Activated naive CD4-positive, alpha-beta T cell treated with anti-CD3 and anti-CD28 coated beads for 36 hours (primary cell): ENCODE measurements at regions of chr14 and their contacts with region 1.

Region 1: DNA sequence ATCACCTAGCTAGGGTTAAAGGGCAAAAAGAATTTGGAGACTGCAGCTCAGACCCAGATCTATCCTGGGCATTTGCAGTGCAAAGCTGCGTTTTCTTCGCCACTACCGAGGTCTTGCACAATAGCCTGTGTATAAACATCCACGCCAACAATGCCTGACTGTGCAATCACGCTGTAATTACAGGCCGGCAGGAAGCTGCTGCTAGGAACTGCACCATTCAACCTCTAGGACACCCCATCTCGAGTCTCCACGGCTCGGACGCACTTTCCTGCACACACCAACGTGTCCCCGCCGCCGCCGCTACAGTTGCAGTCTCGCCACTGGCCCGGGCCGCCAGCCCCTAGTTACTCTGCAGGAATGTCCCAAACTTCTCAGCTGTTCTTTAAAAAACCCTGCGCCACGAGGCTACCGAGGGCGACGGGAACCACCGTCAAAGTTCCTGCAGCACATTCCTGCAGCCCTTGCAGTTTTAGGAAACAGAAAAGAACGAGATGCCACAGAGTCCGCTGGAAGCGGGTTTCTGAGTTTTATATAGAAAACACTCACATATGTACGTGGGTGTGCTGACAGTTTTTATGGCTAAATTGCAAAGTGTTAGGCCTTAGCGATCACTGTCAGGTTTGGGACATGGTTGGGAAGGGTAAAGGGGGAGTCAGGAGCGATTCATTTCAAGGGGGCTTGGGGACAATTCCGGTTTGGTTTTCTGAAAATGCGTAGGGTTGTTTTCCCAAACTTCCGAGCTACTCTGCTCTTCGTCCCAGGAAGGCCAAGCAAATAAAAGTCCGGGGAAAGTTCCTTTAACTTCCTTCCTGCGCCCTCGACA is 65.5 kb upstream of the PTGR2 start:
- DNase-seq: peak; percentile 75
- H3K4me3 Mint-ChIP-seq: peak overlapping the region; percentile 90
- H3K27ac Mint-ChIP-seq: peak overlapping the region; percentile 91
- H3K4me1 Mint-ChIP-seq: peaks cover 56% of the 10 kb centered on the region
- H3K27me3 Mint-ChIP-seq: no peaks in the 10 kb centered on the region

Region 2: DNA sequence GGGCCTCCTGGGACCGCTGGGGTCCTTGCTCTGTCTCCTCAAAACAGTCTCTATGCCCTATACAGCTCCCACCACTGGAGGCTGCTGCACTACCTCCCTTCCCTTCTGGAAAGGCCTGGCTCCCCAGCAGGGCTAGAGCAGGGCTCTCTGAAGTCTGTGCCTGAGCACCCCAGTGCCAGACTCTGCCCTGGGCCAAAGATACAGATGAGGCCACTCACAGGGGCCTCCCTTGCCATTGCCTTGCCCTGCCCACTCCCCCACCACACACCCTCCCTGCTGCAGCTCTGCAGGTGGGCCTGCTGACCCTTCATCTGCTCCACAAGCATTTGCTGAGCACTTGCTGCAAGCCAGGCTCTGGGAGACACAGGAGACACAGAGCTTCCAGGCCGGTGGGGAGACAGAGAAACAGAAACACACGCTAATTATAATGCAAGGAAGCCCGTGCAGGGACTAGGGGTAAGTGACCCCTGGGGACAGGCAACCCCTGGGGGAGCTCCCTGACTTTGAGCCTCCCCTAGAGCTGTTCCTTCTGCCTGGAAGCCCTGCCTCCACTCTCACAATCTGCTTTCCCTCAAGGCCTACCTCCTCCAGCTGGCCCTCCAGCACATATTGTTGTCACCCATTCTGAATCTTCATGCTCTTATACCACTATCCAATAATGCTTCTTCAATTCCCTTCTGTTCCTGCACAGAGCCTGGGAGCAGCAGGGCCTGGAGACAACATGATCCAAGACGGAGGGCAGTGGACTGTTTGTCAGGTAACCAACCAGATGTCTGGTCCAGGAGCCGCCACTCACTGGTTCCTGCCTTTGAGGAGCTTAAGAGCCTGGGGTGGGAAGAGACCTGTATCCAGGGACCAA is 39.3 kb before region 1 on chr14:
- CTCF ChIA-PET with region 1: interaction called, 12 read pairs
- intact Hi-C with region 1: loop called (anchors 5 kb)
- DNase-seq: no peak
- H3K4me3 Mint-ChIP-seq: no peak overlapping the region
- H3K27ac Mint-ChIP-seq: peak overlapping the region; percentile 2
- H3K4me1 Mint-ChIP-seq: peaks cover 99% of the 10 kb centered on the region
- H3K27me3 Mint-ChIP-seq: no peaks in the 10 kb centered on the region

Region 3: GRCh38 chr14:73771848-73772638 is 14.0 kb before region 1 on chr14:
- CTCF ChIA-PET with region 1: interaction called, 14 read pairs
- intact Hi-C with region 1: loop called (anchors 1 kb)
- DNase-seq: peak; percentile 92
- H3K4me3 Mint-ChIP-seq: peak overlapping the region; percentile 56
- H3K27ac Mint-ChIP-seq: peak overlapping the region; percentile 80
- H3K4me1 Mint-ChIP-seq: peaks cover 66% of the 10 kb centered on the region
- H3K27me3 Mint-ChIP-seq: no peaks in the 10 kb centered on the region

Region 4: DNA sequence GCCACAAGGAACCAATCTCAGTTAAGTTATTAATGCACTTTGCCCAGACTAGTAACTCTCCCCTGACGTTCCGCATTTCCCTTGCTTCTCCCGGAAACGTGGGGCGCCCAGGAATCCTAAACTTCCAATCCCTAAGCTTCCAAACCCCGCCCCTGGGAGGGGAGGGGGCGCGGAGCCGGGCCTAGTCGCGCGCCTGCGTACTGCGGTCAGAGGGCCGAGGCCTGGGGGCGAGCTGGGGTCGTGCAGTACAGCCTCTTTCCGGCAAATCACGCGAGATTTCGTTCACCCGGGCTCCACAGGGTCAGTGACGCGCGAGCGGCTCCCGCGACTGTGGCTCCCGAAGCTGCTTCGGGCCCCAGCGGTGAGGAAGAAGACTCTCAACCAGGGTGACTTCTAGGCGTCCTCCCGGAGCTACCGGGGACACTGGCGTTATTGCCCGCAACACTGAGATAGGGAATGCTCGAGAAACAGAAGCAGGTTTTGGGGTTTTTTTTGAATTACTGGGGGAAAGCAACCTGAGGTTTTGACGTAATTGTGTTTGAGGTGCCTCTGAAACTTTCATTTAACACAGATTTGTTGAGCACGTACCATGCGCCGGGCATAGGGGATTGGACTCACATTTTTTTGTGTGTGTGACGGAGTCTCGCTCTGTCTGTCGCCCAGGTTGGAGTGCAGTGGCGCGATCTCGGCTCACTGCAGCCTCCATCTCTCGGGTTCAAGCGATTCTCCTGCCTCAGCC is 65.7 kb after region 1 on chr14 and contains the start of gene PTGR2:
- CTCF ChIA-PET with region 1: interaction called, 4 read pairs
- intact Hi-C with region 1: loop called (anchors 1 kb)
- DNase-seq: peak; percentile 91
- H3K4me3 Mint-ChIP-seq: peak within 1 kb of the TSS; percentile 92
- H3K27ac Mint-ChIP-seq: peak within 1 kb of the TSS; percentile 96
- H3K4me1 Mint-ChIP-seq: peaks cover 20% of the 10 kb centered on the region
- H3K27me3 Mint-ChIP-seq: no peaks in the 10 kb centered on the region
- total RNA-seq, gene PTGR2: 10.7 to 14.1 TPM

Region 5: DNA sequence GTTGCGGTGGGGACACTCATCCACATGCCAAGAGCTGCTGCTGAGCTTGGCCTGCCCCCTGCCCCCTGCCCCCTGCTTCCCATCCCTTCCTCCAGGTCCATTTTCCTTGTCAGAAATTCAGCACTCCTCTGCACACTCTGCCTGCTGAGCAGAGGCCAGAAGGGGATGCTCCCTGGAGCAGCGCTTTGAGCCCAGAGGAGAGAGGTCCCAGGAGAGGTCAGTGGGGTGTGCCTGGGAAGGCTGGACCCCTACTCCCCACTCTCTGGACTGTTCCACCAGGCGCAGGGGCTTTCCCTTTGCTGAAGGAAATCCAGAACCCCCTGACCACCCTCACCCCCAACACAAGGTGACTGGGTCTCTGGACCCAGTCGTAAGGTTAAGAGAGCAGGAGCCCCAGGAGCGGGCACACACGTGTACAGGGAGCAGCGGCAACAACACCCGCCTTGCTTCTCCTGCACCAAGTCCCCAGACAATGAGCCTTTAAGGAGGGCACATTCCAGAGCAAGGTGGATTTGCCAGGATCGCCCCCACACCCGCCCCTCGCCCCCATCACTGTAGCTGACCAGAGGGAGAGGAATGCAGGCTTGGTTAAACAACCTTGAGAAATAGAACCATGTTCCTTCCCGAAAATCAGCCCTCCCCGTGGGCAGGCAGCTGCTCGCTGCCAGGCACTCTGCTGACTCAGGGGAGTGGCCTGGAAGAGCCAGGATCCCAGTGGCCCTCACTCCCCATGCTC is 738.2 kb after region 1 on chr14:
- CTCF ChIA-PET with region 1: no interaction called
- intact Hi-C with region 1: no loop called
- DNase-seq: no peak
- H3K4me3 Mint-ChIP-seq: no peak overlapping the region
- H3K27ac Mint-ChIP-seq: no peak overlapping the region
- H3K4me1 Mint-ChIP-seq: no peaks in the 10 kb centered on the region
- H3K27me3 Mint-ChIP-seq: peaks cover 2% of the 10 kb centered on the region